MCF 10A (cell line): ENCODE measurements at regions of chr16 and their contacts with region 1.

Region 1: DNA sequence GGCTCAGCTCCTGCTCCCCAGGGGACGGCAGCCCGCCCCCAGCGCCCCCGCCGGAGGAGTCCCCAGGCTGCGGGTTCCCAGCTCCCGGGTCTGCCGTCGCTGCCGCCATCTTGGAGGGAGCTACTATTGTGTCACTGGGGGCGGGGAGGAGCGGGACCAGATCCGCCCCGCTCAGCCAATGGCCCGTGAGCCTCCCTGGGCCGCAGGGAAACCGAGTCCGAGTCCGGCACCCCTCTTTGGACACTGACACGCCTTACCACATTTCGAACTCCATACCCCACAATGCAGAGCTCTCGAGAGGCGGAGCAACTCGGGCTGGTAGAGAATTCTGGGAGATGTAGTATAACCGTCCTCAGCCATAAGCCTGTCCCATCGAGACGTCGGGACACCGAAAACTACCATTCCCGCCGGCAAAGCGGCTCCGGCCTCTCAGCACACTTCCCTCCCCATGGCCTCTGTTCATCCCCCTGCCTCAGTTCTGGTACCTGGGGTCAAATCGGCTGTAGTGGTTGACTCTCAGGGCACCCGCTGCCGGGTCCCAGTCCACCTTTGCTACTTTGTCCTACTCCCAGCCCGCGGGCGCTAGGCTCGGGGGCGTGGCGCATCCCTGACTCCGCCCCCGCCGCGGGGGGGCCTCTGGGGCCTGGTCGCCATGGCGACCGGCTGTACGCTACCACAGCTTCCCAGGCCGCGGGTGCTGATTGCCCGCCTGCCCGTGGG is at the starts of genes RANBP10 and TSNAXIP1:
- DNase-seq: peak; percentile 99
- H3K4me3 Mint-ChIP-seq: peak within 1 kb of the TSS; percentile 90
- H3K27ac Mint-ChIP-seq: peak within 1 kb of the TSS; percentile 89
- H3K4me1 Mint-ChIP-seq: peaks cover 5% of the 10 kb centered on the region
- H3K27me3 Mint-ChIP-seq: no peaks in the 10 kb centered on the region
- CTCF ChIP-seq: no peak
- total RNA-seq, gene RANBP10: 17.2 and 21.7 TPM in 2 replicates
- total RNA-seq, gene TSNAXIP1: 1.1 and 1.5 TPM in 2 replicates

Region 2: DNA sequence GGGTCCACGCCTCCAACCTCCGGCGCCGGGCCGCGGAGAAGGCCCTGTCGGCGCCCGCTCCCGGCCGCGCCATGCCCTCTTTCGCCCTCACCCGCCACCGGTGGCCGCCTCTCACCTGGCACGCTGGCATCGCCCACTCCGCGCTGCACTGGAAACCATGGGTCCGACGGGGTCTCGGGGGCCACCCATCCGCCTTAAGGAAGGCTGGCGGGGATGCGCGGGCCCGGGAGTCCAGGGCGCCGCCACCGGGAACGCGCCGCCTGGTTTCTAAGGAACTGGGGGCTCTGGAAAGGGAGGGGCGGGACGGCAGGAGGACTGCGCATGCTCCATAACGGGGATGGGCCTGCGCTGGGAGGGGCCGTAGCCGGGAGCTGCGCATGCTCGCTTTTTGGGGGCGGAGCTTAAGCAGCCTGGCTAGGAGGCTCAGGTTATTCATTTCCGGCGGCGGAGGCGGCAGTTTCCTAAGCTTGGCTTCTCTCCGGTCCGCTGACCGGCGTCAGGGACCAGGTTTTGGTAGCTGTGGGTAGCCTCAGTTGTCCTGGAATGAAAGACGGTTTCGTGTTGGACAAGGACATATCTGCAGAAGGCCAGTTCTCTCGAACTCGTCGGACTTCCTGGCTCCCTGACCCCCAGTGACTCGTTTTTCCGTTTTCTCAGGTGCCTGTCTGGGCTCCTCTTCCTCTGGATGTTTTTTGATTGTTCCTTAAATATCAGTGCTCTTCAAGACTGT is 87.4 kb before region 1 on chr16 and contains the start of gene GFOD2:
- CTCF ChIA-PET with region 1: interaction called, 7 read pairs
- POLR2A ChIA-PET with region 1: interaction called, 27 read pairs
- intact Hi-C with region 1: loop called (anchors 5 kb)
- DNase-seq: peak; percentile 95
- H3K4me3 Mint-ChIP-seq: peak within 1 kb of the TSS; percentile 81
- H3K27ac Mint-ChIP-seq: peak within 1 kb of the TSS; percentile 96
- H3K4me1 Mint-ChIP-seq: peaks cover 41% of the 10 kb centered on the region
- H3K27me3 Mint-ChIP-seq: no peaks in the 10 kb centered on the region
- CTCF ChIP-seq: no peak
- total RNA-seq, gene GFOD2: 14.8 and 19.0 TPM in 2 replicates

Region 3: GRCh38 chr16:67786491-67786890 is 20.1 kb before region 1 on chr16:
- CTCF ChIA-PET with region 1: no interaction called
- POLR2A ChIA-PET with region 1: no interaction called
- intact Hi-C with region 1: no loop called
- DNase-seq: no peak
- H3K4me3 Mint-ChIP-seq: no peak overlapping the region
- H3K27ac Mint-ChIP-seq: no peak overlapping the region
- H3K4me1 Mint-ChIP-seq: no peaks in the 10 kb centered on the region
- H3K27me3 Mint-ChIP-seq: no peaks in the 10 kb centered on the region
- CTCF ChIP-seq: no peak